Activated B cell treated with CpG ODN at 0.5 μM for 24 hours (primary cell): ENCODE measurements at regions of chr2 and their contacts with region 1.

Region 1: DNA sequence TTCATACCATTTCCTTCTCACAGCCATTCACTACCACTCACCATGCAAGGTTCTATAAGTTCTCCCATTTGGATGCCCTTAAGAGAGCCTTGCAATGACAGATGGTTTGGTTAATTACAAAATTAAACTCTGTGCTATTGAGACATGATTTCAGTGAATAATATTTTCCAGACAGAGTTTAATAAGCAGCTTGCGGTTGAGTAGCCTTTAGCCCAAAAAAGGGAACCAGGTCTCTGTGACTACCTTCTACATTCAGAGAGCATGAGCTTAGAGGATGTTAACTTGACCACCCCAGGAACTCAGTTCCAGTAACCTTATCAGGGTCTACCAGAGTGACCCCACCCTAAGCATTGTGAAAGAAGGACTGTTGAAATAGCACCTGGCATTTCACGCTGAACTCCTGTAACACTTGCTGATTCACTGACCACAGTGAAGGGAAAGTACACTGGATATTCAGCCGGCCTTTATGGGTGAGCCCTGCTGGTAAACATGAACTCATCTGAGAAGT is 1173.1 kb upstream of the ZEB2 start:
- DNase-seq: no peak
- ATAC-seq: peak; percentile 86
- H3K4me3 Mint-ChIP-seq: peak overlapping the region; percentile 71
- H3K27ac Mint-ChIP-seq: peak overlapping the region; percentile 89
- H3K4me1 Mint-ChIP-seq: peaks cover 55% of the 10 kb centered on the region
- H3K27me3 Mint-ChIP-seq: no peaks in the 10 kb centered on the region
- CTCF ChIP-seq: no peak

Region 2: DNA sequence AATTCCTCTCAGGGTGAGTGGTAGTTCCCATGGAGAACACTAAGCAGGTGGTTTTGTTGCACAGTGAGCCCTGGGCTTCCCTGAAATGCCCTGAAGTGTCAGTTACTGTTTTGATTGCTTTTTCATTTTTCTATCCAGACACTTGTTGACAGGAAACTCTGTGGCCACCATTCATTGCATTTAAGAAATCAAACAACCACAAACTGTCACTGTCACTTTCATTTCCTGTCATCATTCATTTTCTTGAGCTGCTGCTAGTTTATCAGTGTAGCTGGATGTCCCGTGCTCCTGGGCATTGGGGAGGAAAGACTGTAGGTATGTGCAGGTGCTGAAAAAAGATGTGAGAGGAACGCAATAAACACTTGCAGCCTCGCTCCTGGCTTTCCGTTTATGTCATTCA is 281.5 kb before region 1 on chr2:
- CTCF ChIA-PET with region 1: no interaction called
- POLR2A ChIA-PET with region 1: no interaction called
- intact Hi-C with region 1: loop called (anchors 5 kb)
- DNase-seq: no peak
- ATAC-seq: peak; percentile 82
- H3K4me3 Mint-ChIP-seq: peak overlapping the region; percentile 74
- H3K27ac Mint-ChIP-seq: peak overlapping the region; percentile 65
- H3K4me1 Mint-ChIP-seq: peaks cover 35% of the 10 kb centered on the region
- H3K27me3 Mint-ChIP-seq: peaks cover 3% of the 10 kb centered on the region
- CTCF ChIP-seq: no peak

Region 3: DNA sequence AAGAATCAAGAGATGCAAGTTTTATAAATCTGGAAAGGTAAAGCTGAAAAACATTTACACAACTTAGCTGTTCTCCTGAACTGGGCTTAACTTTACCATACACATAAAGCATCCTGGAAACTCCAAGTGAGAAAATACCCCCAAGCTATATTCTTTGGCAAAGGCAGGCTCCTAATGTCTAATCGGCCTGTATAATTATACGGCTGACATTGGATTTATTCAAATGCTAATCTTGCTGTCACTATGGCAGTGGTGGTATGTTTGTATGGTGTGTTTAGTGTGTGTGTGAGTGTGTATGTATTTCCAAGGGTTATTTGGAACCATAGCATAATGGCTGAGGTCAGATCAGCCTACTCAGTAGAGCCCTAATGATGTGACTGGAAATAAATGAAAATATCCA is 141.3 kb before region 1 on chr2:
- CTCF ChIA-PET with region 1: no interaction called
- POLR2A ChIA-PET with region 1: no interaction called
- intact Hi-C with region 1: loop called (anchors 5 kb)
- DNase-seq: no peak
- ATAC-seq: no peak
- H3K4me3 Mint-ChIP-seq: no peak overlapping the region
- H3K27ac Mint-ChIP-seq: no peak overlapping the region
- H3K4me1 Mint-ChIP-seq: no peaks in the 10 kb centered on the region
- H3K27me3 Mint-ChIP-seq: no peaks in the 10 kb centered on the region
- CTCF ChIP-seq: no peak

Region 4: GRCh38 chr2:145644820-145645302 is 48.2 kb before region 1 on chr2:
- CTCF ChIA-PET with region 1: no interaction called
- POLR2A ChIA-PET with region 1: no interaction called
- intact Hi-C with region 1: loop called (anchors 2 kb)
- DNase-seq: no peak
- ATAC-seq: peak; percentile 86
- H3K4me3 Mint-ChIP-seq: peak overlapping the region; percentile 70
- H3K27ac Mint-ChIP-seq: peak overlapping the region; percentile 92
- H3K4me1 Mint-ChIP-seq: peaks cover 47% of the 10 kb centered on the region
- H3K27me3 Mint-ChIP-seq: no peaks in the 10 kb centered on the region
- CTCF ChIP-seq: no peak

Region 5: GRCh38 chr2:145811276-145812164 is 118.5 kb after region 1 on chr2:
- CTCF ChIA-PET with region 1: no interaction called
- POLR2A ChIA-PET with region 1: no interaction called
- intact Hi-C with region 1: no loop called
- DNase-seq: no peak
- ATAC-seq: no peak
- H3K4me3 Mint-ChIP-seq: no peak overlapping the region
- H3K27ac Mint-ChIP-seq: no peak overlapping the region
- H3K4me1 Mint-ChIP-seq: no peaks in the 10 kb centered on the region
- H3K27me3 Mint-ChIP-seq: no peaks in the 10 kb centered on the region
- CTCF ChIP-seq: no peak